Left colon (tissue), 2 donors: ENCODE measurements at regions of chr3 and their contacts with region 1.

Region 1: GRCh38 chr3:52134761-52135160 is 19.5 kb downstream of the POC1A start:
- DNase-seq: no peak
- ATAC-seq: no peak

Region 2: GRCh38 chr3:51995346-51996163 is 139.2 kb before region 1 on chr3 and contains the start of gene RPL29:
- intact Hi-C with region 1: loop called (anchors 5 kb)
- DNase-seq: peak; percentile 92 to 93
- ATAC-seq: peak; percentile 96
- total RNA-seq, gene RPL29: 894 to 910 TPM

Region 3: GRCh38 chr3:52339612-52340011 is 204.9 kb after region 1 on chr3:
- intact Hi-C with region 1: no loop called
- DNase-seq: peak in 1 of 2 donors; percentile 34
- ATAC-seq: peak; percentile 79